Activated CD8-positive, alpha-beta T cell treated with anti-CD3 and anti-CD28 coated beads, Interleukin-2, amount 10 ng/mL, durations not matched to agents 7 days and 5 days (primary cell): ENCODE measurements at regions of chr12 and their contacts with region 1.

Region 1: GRCh38 chr12:1583421-1584078 is 10.8 kb downstream of the FBXL14 start:
- DNase-seq: peak; percentile 76
- ATAC-seq: peak; percentile 78
- H3K4me3 Mint-ChIP-seq: no peak overlapping the region
- H3K27ac Mint-ChIP-seq: no peak overlapping the region
- H3K4me1 Mint-ChIP-seq: peaks cover 18% of the 10 kb centered on the region
- H3K27me3 Mint-ChIP-seq: no peaks in the 10 kb centered on the region

Region 2: DNA sequence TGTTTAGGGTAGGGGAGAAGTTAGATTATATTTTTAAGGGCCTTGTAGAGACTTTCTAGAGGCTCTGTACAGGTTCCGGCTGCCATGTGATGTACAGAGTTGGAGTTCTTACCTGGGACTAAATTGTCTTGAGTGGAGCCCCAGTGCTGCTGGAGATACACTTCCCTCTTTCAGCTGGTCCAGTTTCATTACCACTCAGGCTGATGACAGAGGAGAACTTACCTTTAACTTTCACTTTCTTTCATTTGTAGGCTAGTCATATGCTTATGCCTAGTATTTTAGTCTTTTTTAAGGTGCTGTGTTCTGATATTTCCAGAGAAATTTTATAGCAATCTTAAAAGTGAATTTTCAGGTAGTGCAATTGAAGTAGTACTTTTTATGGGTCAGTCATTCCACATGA is 475.3 kb before region 1 on chr12:
- CTCF ChIA-PET with region 1: interaction called, 19 read pairs
- POLR2A ChIA-PET with region 1: no interaction called
- DNase-seq: no peak
- ATAC-seq: peak; percentile 70
- H3K4me3 Mint-ChIP-seq: no peak overlapping the region
- H3K27ac Mint-ChIP-seq: no peak overlapping the region
- H3K4me1 Mint-ChIP-seq: peaks cover 30% of the 10 kb centered on the region
- H3K27me3 Mint-ChIP-seq: no peaks in the 10 kb centered on the region

Region 3: DNA sequence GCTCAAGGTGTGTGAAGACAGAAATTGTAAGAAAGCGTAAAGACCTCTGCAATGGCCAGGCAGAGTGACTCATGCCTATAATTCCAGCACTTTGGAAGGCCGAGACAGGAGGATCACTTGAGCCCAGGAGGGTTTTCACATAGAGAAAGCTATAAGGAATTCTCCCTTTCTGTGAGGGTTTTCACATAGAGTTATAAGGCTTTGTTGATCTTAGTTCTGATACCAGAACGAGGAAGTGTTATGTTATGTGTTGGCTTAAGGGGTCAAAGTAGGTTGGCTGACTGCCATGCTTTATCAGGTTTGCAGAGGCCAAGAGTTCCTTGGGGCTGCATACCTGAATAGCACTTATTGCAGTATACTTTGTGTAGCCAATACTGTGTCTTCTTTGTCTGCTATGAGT is 453.4 kb before region 1 on chr12:
- CTCF ChIA-PET with region 1: interaction called, 10 read pairs
- POLR2A ChIA-PET with region 1: no interaction called
- DNase-seq: no peak
- ATAC-seq: no peak
- H3K4me3 Mint-ChIP-seq: no peak overlapping the region
- H3K27ac Mint-ChIP-seq: no peak overlapping the region
- H3K4me1 Mint-ChIP-seq: peaks cover 25% of the 10 kb centered on the region
- H3K27me3 Mint-ChIP-seq: no peaks in the 10 kb centered on the region

Region 4: GRCh38 chr12:1533602-1534304 is 49.8 kb before region 1 on chr12:
- CTCF ChIA-PET with region 1: interaction called, 38 read pairs
- POLR2A ChIA-PET with region 1: no interaction called
- DNase-seq: peak; percentile 74
- ATAC-seq: peak; percentile 67
- H3K4me3 Mint-ChIP-seq: peak overlapping the region; percentile 59
- H3K27ac Mint-ChIP-seq: peak overlapping the region; percentile 56
- H3K4me1 Mint-ChIP-seq: peaks cover 38% of the 10 kb centered on the region
- H3K27me3 Mint-ChIP-seq: peaks cover 69% of the 10 kb centered on the region

Region 5: DNA sequence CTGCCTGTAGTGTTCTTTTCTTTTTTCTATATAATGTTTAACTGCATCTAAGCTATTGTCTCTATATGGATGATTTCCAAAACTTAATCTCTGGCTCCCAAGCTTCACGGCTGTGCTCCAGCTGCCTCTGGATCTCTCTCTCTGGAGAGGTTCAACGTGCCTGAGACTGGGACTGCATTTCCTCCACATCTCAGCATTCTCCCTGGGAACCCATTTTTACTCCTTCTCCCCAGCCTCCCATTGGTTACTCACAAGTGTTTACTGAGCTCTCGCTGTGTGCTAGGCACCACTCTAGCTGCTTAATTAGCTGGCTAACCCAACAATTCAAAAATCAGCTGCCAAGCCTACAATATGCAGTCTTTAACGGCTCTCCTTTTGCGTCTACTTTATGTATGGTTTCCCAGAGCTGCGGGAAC is 23.9 kb before region 1 on chr12:
- CTCF ChIA-PET with region 1: interaction called, 10 read pairs
- POLR2A ChIA-PET with region 1: no interaction called
- DNase-seq: no peak
- ATAC-seq: no peak
- H3K4me3 Mint-ChIP-seq: no peak overlapping the region
- H3K27ac Mint-ChIP-seq: no peak overlapping the region
- H3K4me1 Mint-ChIP-seq: no peaks in the 10 kb centered on the region
- H3K27me3 Mint-ChIP-seq: peaks cover 14% of the 10 kb centered on the region

Region 6: DNA sequence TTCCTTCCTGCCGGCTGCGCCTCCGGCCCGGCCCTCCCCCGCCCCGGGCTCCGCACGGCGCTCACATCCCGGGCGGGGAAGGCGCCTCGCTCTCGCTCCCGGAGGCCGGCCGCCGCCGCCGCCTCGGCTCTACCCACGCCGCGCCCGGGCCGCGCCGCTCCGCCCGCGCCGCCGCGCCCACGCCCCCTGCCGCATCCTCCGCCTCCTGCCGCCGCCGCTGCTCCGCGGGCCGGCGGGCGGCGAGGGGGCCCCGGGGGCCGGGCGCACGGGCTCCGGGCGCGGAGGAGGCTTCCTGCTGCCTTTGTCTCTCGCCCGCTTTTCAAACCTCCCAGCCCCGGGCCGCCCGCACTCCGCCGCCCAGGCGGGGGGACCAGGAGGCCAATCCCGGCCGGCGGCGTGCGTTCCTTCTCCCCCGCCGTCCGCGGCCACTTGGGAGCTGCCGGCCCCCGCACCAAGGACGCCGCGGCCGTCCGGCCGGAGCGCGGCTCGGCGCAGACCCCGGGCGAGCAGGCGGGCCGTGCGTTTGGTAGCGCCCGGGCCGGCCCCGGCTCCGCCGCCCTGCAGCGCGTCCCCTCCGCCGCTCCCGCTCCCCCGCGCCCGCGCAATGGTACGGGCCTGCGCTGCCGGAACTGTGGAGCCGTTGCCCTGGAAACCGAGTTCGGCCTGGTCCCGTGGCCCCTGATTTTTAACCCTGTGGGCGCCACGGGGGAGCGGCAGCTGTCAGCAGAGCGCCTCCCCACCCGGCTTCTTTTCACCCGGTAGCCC is 10.9 kb after region 1 on chr12 and contains the start of gene FBXL14:
- CTCF ChIA-PET with region 1: interaction called, 48 read pairs
- POLR2A ChIA-PET with region 1: interaction called, 5 read pairs
- DNase-seq: peak; percentile 94
- ATAC-seq: peak; percentile 75
- H3K4me3 Mint-ChIP-seq: peak within 1 kb of the TSS; percentile 95
- H3K27ac Mint-ChIP-seq: peak within 1 kb of the TSS; percentile 98
- H3K4me1 Mint-ChIP-seq: peaks cover 45% of the 10 kb centered on the region
- H3K27me3 Mint-ChIP-seq: no peaks in the 10 kb centered on the region
- total RNA-seq, gene FBXL14: 27.5 to 28.9 TPM

Region 7: DNA sequence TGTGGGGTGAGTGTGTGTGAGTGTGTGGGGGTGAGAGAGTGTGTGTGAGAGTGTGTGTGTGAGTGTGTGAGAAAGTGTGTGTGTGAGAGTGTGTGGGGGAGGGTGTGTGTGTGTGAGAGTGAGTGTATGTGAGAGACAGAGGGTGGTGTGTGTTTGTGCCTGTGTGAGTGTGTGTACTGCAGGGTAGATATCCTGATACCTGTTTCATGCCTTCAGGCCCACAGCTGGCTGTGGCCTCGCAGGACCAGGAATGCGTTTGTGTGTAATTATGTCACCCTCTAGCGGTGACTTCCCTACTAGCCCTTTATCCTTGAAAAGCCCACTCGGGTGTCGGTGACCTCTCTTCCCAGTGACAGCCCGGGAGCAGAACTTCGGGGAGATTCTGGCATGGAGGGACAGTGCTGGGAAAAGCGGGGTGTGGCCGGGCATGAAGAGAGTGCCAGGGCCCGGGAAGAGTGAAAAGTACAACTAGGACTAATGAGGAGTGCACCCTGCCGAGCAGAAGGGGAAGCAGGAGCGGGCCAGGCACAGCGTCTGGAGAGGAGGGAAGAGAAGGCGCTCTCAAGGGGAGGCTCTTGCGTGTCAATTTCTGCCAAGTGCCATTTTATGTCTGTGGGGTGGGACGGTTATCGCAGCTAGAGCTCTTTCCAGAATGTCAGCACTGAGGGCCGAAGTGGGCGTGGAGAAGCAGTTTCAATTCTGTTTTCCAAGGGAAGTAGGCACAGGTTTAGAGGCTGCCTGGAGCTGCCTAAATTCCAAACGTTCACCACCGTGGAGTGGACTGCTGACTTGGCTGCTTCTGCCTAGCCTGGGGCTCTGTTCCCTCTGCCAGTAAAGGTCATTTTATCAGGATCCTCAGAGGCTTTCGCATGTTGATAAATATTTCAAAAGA is 21.8 kb after region 1 on chr12:
- CTCF ChIA-PET with region 1: interaction called, 25 read pairs
- POLR2A ChIA-PET with region 1: interaction called, 3 read pairs
- DNase-seq: peak; percentile 74
- ATAC-seq: peak; percentile 76
- H3K4me3 Mint-ChIP-seq: peak overlapping the region; percentile 72
- H3K27ac Mint-ChIP-seq: peak overlapping the region; percentile 29
- H3K4me1 Mint-ChIP-seq: peaks cover 45% of the 10 kb centered on the region
- H3K27me3 Mint-ChIP-seq: peaks cover 8% of the 10 kb centered on the region